K562 (cell line): ENCODE measurements at regions of chr6 and their contacts with region 1.

Region 1: GRCh38 chr6:14144678-14145113 is 27.1 kb downstream of the CD83 start:
- DNase-seq: peak; percentile 90 to 96 (median 93)
- ATAC-seq: peak; percentile 99
- H3K4me3 ChIP-seq: no peak overlapping the region
- H3K27ac ChIP-seq: no peak overlapping the region
- H3K4me1 ChIP-seq: peaks cover 0 to 3% of the 10 kb centered on the region in 2 experiments; a peak in 2 of 5 replicates
- H3K27me3 ChIP-seq: peaks cover 18 to 31% of the 10 kb centered on the region in 2 experiments; a peak in 4 of 5 replicates
- CTCF ChIP-seq: peak; percentile 94 to 97 (median 95)
- EP300 ChIP-seq: no peak
- POLR2A ChIP-seq: no peak
- RAD21 ChIP-seq: peak; percentile 95 to 96

Region 2: DNA sequence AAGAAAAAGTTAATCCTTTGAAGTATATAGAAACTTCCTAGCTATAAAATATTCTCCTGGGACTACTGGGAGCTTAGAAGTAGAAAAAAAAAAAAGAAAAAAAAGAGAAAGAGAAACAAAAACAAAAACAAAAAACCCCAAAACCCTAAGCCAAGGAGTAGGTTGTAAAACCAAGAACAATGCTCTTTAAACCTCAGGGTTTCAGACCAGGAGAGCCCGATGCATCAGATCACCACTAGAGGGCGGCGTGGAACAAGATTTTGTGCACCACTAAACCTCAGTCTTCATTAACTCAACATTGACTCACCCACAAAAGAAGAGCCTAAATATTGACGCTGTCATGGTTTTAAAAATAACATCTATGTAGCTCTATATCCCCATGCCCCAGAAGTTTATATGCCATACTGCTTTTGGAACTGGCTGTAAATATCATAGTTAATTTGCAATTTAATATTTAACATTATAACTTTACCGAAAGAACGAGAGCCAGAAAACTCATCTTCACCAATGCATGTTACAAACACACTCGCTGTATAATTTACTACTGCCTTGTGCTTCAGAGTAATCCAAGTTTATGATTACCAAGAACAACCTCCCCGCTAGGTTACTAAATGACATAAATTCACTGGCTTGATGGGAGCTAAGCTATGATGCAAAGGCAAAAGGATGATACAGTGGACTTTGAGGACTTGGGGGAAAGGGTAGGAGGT is 349.5 kb before region 1 on chr6:
- CTCF ChIA-PET with region 1: interaction called, 5 read pairs
- POLR2A ChIA-PET with region 1: no interaction called
- in situ Hi-C with region 1: no loop called
- intact Hi-C with region 1: loop called (anchors 2 kb)
- DNase-seq: peak; percentile 75 to 89 (median 81)
- ATAC-seq: peak; percentile 100
- H3K4me3 ChIP-seq: no peak overlapping the region
- H3K27ac ChIP-seq: no peak overlapping the region
- H3K4me1 ChIP-seq: no peaks in the 10 kb centered on the region
- H3K27me3 ChIP-seq: no peaks in the 10 kb centered on the region
- CTCF ChIP-seq: peak; percentile 85 to 96 (median 96)
- EP300 ChIP-seq: no peak
- POLR2A ChIP-seq: no peak
- RAD21 ChIP-seq: peak; percentile 87 to 92

Region 3: GRCh38 chr6:14075095-14075503 is 69.6 kb before region 1 on chr6:
- CTCF ChIA-PET with region 1: interaction called, 3 read pairs
- POLR2A ChIA-PET with region 1: no interaction called
- in situ Hi-C with region 1: no loop called
- intact Hi-C with region 1: loop called (anchors 5 kb)
- DNase-seq: no peak
- ATAC-seq: peak; percentile 60
- H3K4me3 ChIP-seq: no peak overlapping the region
- H3K27ac ChIP-seq: no peak overlapping the region
- H3K4me1 ChIP-seq: peaks cover 0 to 12% of the 10 kb centered on the region in 2 experiments; a peak in 3 of 5 replicates
- H3K27me3 ChIP-seq: no peaks in the 10 kb centered on the region
- CTCF ChIP-seq: no peak
- EP300 ChIP-seq: no peak
- POLR2A ChIP-seq: no peak
- RAD21 ChIP-seq: no peak

Region 4: GRCh38 chr6:14129575-14129974 is 15.1 kb before region 1 on chr6:
- CTCF ChIA-PET with region 1: interaction called, 12 read pairs
- POLR2A ChIA-PET with region 1: interaction called, 5 read pairs
- in situ Hi-C with region 1: no loop called
- intact Hi-C with region 1: loop called (anchors 1 kb)
- DNase-seq: peak; percentile 61 to 81 (median 72)
- ATAC-seq: peak; percentile 99
- H3K4me3 ChIP-seq: no peak overlapping the region
- H3K27ac ChIP-seq: no peak overlapping the region
- H3K4me1 ChIP-seq: peaks cover 4 to 11% of the 10 kb centered on the region in 2 experiments; a peak in 2 of 5 replicates
- H3K27me3 ChIP-seq: no peaks in the 10 kb centered on the region
- CTCF ChIP-seq: peak; percentile 79 to 91 (median 91)
- EP300 ChIP-seq: no peak
- POLR2A ChIP-seq: no peak
- RAD21 ChIP-seq: peak; percentile 93 to 94